ENCODE measurements at regions of chr7 and their contacts with region 1.

Region 1: GRCh38 chr7:92447345-92448204 is at the start of gene GATAD1:
- DNase-seq: peak; percentile 90
- CTCF ChIP-seq: peak; percentile 93

Region 2: DNA sequence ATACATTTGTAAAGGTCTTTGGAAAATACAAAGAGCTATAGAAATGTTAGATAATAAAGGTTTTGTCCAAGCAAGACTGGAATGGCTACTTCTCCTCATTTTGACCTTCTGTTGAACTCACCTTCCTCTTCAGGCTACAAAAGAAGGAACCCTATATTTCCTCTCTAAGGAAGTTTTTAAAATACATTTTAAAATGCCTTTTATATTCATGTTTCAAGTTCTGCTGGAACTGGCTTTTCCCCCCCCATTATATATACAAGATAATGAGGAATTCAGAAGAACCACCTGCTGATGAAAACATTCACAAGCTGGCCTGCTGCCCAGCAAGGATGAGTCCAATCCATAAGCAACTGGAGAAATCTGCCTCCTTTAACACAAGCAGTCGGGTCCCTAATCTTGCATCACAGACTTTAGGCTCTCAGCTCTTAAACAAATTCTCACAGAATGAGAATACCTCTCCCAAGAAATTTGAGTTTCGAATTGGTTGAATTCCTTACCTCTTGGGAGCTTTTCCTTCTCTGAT is 611.7 kb before region 1 on chr7:
- CTCF ChIA-PET with region 1: interaction called, 45 read pairs
- POLR2A ChIA-PET with region 1: no interaction called
- DNase-seq: no peak
- CTCF ChIP-seq: no peak

Region 3: GRCh38 chr7:92178927-92179924 is 268.3 kb before region 1 on chr7 and contains the start of gene LRRD1:
- CTCF ChIA-PET with region 1: interaction called, 22 read pairs
- POLR2A ChIA-PET with region 1: no interaction called
- DNase-seq: peak; percentile 93
- CTCF ChIP-seq: peak; percentile 99

Region 4: DNA sequence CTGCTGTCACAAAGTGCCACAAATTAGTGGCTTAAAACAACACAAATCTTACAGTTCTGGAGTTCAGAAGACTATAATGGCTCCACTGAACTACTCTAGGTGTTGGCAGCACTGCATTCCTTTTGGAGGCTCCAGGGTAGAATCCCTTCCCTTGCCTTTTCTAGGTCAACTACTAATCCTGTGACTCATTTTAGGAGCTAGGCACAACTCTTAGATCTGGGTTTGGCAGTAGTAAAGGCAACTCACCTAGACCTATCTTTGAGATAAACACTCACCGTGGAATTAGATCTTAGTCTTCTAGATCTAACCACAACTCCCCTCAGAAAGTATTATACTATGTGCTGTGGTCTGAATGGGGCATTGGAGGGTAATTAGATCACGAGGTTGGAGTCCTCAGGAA is 141.4 kb before region 1 on chr7:
- CTCF ChIA-PET with region 1: no interaction called
- POLR2A ChIA-PET with region 1: no interaction called
- DNase-seq: no peak
- CTCF ChIP-seq: no peak

Region 5: GRCh38 chr7:92415225-92415624 is 32.4 kb before region 1 on chr7:
- CTCF ChIA-PET with region 1: interaction called, 126 read pairs
- POLR2A ChIA-PET with region 1: no interaction called
- DNase-seq: no peak
- CTCF ChIP-seq: no peak

Region 6: DNA sequence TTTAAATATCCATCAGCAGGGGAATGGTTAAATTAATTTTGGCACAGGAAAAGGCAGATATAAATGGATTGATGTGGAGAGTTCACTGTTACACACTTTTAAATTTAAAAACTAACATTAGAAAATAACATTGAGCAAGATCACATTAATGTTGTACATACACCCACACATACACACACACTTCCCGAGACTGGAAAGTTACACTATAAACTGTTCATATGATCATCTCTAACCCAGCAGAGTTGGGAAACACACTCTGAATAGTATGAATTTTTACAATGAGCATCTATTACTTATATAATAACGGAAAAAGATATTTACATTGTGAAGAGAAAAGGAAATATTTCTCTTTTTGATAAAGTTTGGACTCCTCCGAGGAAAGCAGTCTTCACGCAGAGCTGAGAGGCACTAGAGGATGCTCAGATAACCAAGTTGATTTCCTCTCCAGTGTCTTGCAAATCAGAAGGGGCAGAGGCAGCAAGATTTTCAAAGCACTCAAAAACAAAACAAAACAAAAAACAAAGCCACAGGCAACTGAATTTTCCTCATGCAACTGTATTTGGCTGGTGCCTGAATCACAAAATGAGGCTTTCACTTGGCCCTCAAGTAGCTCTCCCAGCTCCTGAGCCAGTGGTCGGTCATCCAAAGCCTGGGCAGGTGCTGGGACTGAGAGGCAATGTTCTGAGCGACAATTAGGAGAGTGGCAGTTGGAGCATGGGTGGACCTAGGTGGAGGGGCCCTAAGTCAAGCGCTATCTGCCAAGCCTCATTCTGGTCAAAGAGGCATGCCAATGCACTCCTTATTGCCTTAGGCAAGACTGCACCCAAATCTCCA is 10.7 kb before region 1 on chr7:
- CTCF ChIA-PET with region 1: interaction called, 17 read pairs
- POLR2A ChIA-PET with region 1: no interaction called
- DNase-seq: no peak
- CTCF ChIP-seq: no peak

Measured in GM10248 (cell line).